HCT116 (cell line): ENCODE measurements at regions of chr12 and their contacts with region 1.

Region 1: DNA sequence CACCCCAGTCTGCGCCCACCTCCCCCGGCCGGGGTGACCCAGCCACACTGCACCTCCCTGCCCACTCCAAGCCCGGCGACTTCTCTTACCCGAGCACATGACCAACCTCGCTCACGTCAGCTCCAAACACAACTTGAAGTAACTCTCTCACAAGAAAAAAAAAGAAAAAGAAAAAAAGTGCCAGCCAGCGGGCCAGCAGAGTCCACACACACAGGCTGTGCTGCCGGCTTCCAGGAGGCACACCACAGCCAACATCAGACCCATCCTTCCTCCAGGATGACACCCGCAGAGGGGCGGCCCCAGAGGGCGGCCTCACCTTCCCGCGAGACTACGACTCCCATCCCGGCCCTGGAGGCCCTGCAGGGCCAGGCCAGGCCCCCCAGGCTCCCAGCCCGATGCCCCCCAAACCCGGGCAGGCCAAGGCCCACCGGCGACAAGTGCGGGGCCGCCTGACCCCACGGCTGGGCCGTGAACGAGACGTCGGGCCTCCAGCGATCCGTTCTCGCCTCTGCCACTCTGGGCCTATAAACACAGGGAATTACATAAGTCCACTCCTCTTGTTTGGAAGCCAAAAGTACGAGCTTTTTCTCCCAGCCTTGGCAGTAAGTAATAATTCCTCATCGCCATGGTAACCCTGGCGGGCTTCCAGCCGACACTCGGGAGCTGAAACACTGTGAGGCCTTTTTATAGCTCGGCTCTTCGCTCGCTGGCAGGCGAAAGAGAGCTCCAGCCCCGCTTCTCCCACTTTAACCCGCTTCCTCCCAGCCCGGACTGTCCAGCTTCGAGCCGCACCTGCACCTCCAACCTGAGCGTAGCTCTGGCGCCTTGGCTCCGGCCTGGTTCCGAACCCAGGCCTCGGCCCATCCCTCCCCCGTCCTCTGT is 49.1 kb downstream of the NCOR2 start:
- DNase-seq: peak; percentile 56
- ATAC-seq: peak; percentile 33
- H3K4me3 ChIP-seq: peak overlapping the region in 1 of 2 experiments; percentile 14; a peak in 2 of 4 replicates
- H3K27ac ChIP-seq: peak overlapping the region; percentile 88
- H3K4me1 ChIP-seq: peaks cover 63 to 71% of the 10 kb centered on the region in 2 experiments
- H3K27me3 ChIP-seq: no peaks in the 10 kb centered on the region
- CTCF ChIP-seq: no peak
- POLR2A ChIP-seq: no peak
- RAD21 ChIP-seq: no peak

Region 2: DNA sequence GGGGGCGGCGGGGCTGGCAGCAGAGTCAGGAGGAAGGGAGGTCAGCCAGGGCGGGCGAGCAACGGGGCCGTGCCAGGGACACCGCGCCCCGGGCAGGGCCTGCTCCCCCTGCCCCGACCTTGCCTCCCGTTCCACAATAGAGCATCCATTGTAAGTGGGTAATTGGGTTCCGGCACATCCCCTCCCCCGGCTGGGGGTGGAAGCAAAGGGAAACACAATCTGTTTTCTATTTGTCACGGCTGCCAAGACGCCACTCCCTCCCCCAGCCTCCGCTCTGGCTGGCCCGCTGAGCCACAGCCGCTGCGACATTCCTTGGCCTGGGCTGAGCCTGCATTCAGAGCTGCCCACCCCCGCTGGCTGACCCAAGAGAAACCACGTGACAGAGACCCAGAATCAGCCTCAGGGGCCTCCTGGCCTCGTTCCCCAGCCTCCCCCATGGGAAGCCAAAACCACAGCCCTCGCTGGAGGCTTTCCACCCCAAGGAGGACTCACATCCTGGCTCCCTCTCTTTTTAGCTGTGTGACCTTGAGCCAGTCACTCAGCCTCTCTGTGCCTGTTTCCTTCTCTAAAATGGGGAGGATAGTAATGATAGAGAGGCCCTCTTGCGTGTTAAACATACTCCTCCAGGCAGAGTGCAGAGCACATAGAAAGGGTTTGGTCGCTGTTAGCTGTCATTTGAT is 227.7 kb after region 1 on chr12:
- CTCF ChIA-PET with region 1: no interaction called
- POLR2A ChIA-PET with region 1: no interaction called
- RAD21 ChIA-PET with region 1: no interaction called
- intact Hi-C with region 1: loop called (anchors 10 kb)
- DNase-seq: peak; percentile 67
- ATAC-seq: peak; percentile 79
- H3K4me3 ChIP-seq: peak overlapping the region; percentile 30 to 51
- H3K27ac ChIP-seq: peak overlapping the region; percentile 63
- H3K4me1 ChIP-seq: peaks cover 30 to 45% of the 10 kb centered on the region in 2 experiments
- H3K27me3 ChIP-seq: no peaks in the 10 kb centered on the region
- CTCF ChIP-seq: no peak
- POLR2A ChIP-seq: peak; percentile 14
- RAD21 ChIP-seq: no peak

Region 3: DNA sequence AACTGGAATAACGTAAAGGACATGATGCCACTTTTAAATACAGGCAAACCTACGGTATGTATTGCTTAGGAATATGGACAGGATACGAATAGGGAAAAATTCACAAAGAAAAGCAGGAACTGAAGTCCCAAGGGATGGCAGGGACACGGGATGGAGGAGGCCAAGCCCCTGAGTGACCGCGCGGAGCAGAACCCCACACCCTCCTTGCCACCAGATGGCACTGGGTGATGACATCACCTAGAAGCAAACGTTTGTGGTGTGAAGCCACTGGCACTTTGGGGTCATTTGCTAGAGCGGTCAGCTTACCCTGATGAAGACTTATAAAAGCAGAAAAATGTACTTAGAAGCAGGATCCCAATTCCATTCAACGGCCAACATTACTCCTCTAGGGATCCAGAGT is 461.3 kb after region 1 on chr12:
- CTCF ChIA-PET with region 1: no interaction called
- POLR2A ChIA-PET with region 1: no interaction called
- RAD21 ChIA-PET with region 1: no interaction called
- intact Hi-C with region 1: no loop called
- DNase-seq: no peak
- ATAC-seq: peak; percentile 45; the same call in 1 of the 2 replicates
- H3K4me3 ChIP-seq: no peak overlapping the region
- H3K27ac ChIP-seq: no peak overlapping the region
- H3K4me1 ChIP-seq: no peaks in the 10 kb centered on the region
- H3K27me3 ChIP-seq: no peaks in the 10 kb centered on the region
- CTCF ChIP-seq: peak in 1 of 3 experiments; percentile 21; a peak in 1 of 6 replicates
- POLR2A ChIP-seq: no peak
- RAD21 ChIP-seq: no peak